ENCODE measurements at regions of chr2 and their contacts with region 1.

Region 1: GRCh38 chr2:55168221-55169154 is 63.6 kb downstream of the CLHC1 start:
- DNase-seq: peak; percentile 79

Region 2: GRCh38 chr2:54899576-54900200 is 268.8 kb before region 1 on chr2:
- in situ Hi-C with region 1: loop called (anchors 25 kb)
- DNase-seq: peak; percentile 71

Region 3: GRCh38 chr2:55408918-55409868 is 240.7 kb after region 1 on chr2:
- in situ Hi-C with region 1: no loop called
- DNase-seq: peak; percentile 12